ENCODE measurements at regions of chr9 and their contacts with region 1.

Region 1: DNA sequence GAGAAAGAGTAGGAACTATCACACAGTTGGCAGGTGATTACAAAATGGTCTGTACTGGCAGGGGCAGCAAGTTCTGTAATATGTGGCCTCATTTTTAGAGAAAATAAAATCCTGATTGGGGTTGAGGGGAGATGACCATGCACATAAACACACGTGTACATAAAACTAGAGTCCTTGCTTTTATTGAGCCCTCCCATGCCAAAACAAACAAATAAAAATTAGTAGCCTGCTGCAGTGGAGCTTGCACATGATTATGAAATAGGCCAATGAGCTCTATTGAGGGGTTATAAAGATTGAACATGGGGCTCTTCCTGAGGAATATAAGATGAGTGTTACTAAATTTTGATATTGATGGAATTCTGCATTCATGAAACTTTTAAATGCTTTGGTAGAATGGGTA is 248.4 kb downstream of the ELAVL2 start:
- DNase-seq: no peak
- ATAC-seq: no peak
- H3K4me3 ChIP-seq: no peak overlapping the region
- H3K4me3 Mint-ChIP-seq: no peak overlapping the region
- H3K27ac ChIP-seq: no peak overlapping the region
- H3K27ac Mint-ChIP-seq: no peak overlapping the region
- H3K4me1 ChIP-seq: no peaks in the 10 kb centered on the region
- H3K4me1 Mint-ChIP-seq: no peaks in the 10 kb centered on the region
- H3K27me3 ChIP-seq: no peaks in the 10 kb centered on the region
- H3K27me3 Mint-ChIP-seq: no peaks in the 10 kb centered on the region
- CTCF ChIP-seq: no peak

Region 2: DNA sequence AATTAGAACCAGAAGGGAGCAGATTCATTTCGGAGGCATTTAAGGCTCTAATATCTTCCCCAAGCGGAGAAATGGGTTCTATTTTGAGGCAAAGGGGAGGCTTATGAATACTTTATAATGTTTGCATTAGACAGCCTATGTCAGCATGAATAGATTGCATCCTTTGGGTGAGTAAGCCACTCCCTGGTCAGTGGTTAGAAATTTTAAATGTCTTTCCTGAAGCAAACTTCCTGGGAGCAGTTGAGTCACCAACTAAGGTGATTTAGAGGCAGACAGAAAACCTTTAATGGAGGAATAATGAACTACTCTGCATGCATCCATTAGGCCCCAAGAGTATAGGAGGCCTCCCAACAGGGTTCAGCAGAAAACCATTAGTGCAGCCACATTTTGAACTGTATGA is 43.6 kb after region 1 on chr9:
- CTCF ChIA-PET with region 1: no interaction called
- POLR2A ChIA-PET with region 1: no interaction called
- intact Hi-C with region 1: loop called in 1 of 2 experiments (anchors 5 kb)
- DNase-seq: no peak
- ATAC-seq: no peak
- H3K4me3 ChIP-seq: no peak overlapping the region
- H3K4me3 Mint-ChIP-seq: no peak overlapping the region
- H3K27ac ChIP-seq: no peak overlapping the region
- H3K27ac Mint-ChIP-seq: no peak overlapping the region
- H3K4me1 ChIP-seq: no peaks in the 10 kb centered on the region
- H3K4me1 Mint-ChIP-seq: no peaks in the 10 kb centered on the region
- H3K27me3 ChIP-seq: no peaks in the 10 kb centered on the region
- H3K27me3 Mint-ChIP-seq: no peaks in the 10 kb centered on the region
- CTCF ChIP-seq: no peak

Region 3: GRCh38 chr9:23674016-23674585 is 96.5 kb after region 1 on chr9:
- CTCF ChIA-PET with region 1: no interaction called
- POLR2A ChIA-PET with region 1: no interaction called
- intact Hi-C with region 1: no loop called
- DNase-seq: no peak
- ATAC-seq: no peak
- H3K4me3 ChIP-seq: no peak overlapping the region
- H3K4me3 Mint-ChIP-seq: no peak overlapping the region
- H3K27ac ChIP-seq: no peak overlapping the region
- H3K27ac Mint-ChIP-seq: no peak overlapping the region
- H3K4me1 ChIP-seq: no peaks in the 10 kb centered on the region
- H3K4me1 Mint-ChIP-seq: no peaks in the 10 kb centered on the region
- H3K27me3 ChIP-seq: no peaks in the 10 kb centered on the region
- H3K27me3 Mint-ChIP-seq: no peaks in the 10 kb centered on the region
- CTCF ChIP-seq: no peak

Region 4: DNA sequence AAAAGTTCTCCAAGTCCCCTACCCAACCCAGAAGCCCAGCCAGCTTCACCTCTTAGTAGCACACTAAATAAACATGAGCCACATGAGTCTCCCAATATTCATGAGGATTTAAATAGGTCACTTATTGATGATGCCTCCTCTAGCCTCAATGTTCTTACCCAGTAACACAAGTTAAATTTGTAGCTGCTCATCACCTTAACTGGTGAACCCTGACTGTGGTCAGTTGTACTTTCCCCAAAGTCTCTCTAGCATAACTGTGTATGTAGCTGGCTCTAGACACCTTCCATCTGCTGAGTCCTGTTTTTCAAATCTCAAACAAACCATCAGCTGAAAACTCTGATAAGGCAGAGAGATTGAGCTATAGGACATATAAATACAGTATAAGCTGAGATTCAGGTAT is 348.8 kb after region 1 on chr9:
- CTCF ChIA-PET with region 1: no interaction called
- POLR2A ChIA-PET with region 1: no interaction called
- intact Hi-C with region 1: no loop called
- DNase-seq: no peak
- ATAC-seq: no peak
- H3K4me3 ChIP-seq: no peak overlapping the region
- H3K4me3 Mint-ChIP-seq: no peak overlapping the region
- H3K27ac ChIP-seq: no peak overlapping the region
- H3K27ac Mint-ChIP-seq: no peak overlapping the region
- H3K4me1 ChIP-seq: no peaks in the 10 kb centered on the region
- H3K4me1 Mint-ChIP-seq: no peaks in the 10 kb centered on the region
- H3K27me3 ChIP-seq: no peaks in the 10 kb centered on the region
- H3K27me3 Mint-ChIP-seq: no peaks in the 10 kb centered on the region
- CTCF ChIP-seq: no peak